ENCODE measurements at regions of chr2 and their contacts with region 1.

Region 1: DNA sequence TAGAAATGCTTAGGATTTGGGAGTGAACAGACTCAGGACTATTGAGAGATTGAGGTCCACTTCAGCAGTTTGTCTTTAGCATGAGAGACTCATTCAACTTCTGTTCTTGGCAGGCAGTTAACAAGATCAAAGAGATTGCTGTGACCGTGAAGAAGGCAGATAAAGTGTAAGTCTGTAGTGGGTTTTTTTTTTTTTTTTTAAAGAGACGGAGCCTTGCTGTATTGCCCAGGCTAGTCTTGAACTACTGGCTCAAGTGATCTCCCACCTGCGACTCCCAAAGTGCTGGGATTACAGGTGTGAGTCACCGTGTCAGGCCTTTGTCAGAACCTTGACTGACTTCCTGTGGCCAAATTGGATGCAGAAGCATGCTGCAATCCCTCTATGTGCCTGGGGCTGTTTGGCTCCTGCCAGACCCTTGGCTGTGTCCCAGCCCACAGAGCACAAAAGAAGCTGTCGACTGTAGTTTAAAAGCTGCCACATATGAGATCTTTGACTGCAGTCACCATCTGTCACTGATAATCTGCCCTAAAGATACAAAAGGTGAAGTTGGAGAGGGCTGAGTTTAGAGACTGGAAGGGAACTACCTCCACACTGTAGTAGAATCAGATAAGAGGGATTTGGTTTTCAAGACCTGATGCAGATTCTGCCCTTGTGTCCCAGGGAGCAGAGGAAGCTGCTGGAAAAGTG is 9.9 kb downstream of the CCT7 start:
- DNase-seq: no peak
- ATAC-seq: no peak
- H3K4me3 ChIP-seq: no peak overlapping the region
- H3K27ac ChIP-seq: no peak overlapping the region
- H3K4me1 ChIP-seq: peaks cover 2% of the 10 kb centered on the region; the same call in 1 of the 3 replicates
- CTCF ChIP-seq: no peak
- EP300 ChIP-seq: no peak
- POLR2A ChIP-seq: no peak
- RAD21 ChIP-seq: no peak

Region 2: GRCh38 chr2:73260034-73260984 is 16.3 kb after region 1 on chr2:
- CTCF ChIA-PET with region 1: interaction called, 50 read pairs
- POLR2A ChIA-PET with region 1: interaction called, 5 read pairs
- DNase-seq: peak; percentile 76 to 84
- ATAC-seq: peak; percentile 69 to 84
- H3K4me3 ChIP-seq: no peak overlapping the region
- H3K27ac ChIP-seq: no peak overlapping the region
- H3K4me1 ChIP-seq: no peaks in the 10 kb centered on the region
- CTCF ChIP-seq: peak; percentile 61
- EP300 ChIP-seq: no peak
- POLR2A ChIP-seq: no peak
- RAD21 ChIP-seq: peak; percentile 61 to 68